HCT116 (cell line): ENCODE measurements at regions of chr10 and their contacts with region 1.

Region 1: DNA sequence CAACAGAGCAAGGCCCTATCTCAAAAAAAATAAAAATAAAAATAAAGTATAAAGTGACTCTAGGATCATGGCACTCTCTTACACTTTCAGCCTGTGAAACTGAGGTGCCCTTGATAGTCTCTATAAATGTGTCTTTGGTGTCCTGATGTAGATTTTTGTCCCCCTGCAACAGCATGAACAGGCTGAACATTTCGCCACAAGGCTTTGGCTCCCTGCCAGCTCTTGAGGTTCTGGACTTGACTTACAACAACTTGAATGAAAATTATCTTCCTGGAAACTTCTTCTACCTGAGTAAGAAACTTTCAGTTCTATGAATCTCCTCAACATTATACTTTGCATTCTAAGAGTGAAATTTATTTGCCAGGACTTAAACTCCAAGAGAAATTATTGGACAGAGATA is 48.1 kb upstream of the BMS1 start:
- DNase-seq: no peak
- ATAC-seq: no peak
- H3K4me3 ChIP-seq: no peak overlapping the region
- H3K27ac ChIP-seq: no peak overlapping the region
- H3K4me1 ChIP-seq: no peaks in the 10 kb centered on the region
- H3K27me3 ChIP-seq: no peaks in the 10 kb centered on the region
- CTCF ChIP-seq: no peak
- POLR2A ChIP-seq: no peak
- RAD21 ChIP-seq: no peak

Region 2: DNA sequence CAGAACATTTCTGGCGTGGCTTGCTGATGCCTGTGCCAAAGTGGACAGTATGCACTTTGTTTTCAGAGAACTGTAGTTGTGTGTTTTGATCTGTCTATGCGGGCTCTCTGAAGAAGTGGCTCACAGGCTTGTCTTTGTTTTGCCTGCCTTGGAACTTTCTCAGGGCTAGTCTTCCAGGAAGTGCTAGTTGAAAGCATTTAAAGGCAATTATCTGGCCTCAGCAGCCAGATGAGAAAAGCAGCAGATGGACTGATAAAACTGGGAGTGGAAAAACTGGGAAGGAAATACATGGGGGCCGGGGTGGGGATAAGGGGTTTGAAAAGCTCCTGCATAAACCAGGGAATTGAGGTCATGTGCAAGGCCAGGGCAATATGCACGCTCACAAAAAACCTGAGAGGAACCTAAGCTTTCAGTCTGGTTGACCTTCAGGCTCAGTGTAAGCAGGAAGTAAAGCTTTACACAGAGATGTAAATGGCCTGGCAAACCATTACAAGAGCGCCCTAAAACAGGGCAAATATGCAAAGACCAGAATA is 190.6 kb before region 1 on chr10:
- CTCF ChIA-PET with region 1: no interaction called
- POLR2A ChIA-PET with region 1: no interaction called
- RAD21 ChIA-PET with region 1: no interaction called
- intact Hi-C with region 1: loop called (anchors 10 kb)
- DNase-seq: no peak
- ATAC-seq: no peak
- H3K4me3 ChIP-seq: no peak overlapping the region
- H3K27ac ChIP-seq: no peak overlapping the region
- H3K4me1 ChIP-seq: no peaks in the 10 kb centered on the region
- H3K27me3 ChIP-seq: no peaks in the 10 kb centered on the region
- CTCF ChIP-seq: no peak
- POLR2A ChIP-seq: no peak
- RAD21 ChIP-seq: no peak